ENCODE measurements at regions of chr9 and their contacts with region 1.

Region 1: GRCh38 chr9:69104830-69105527 is 69.1 kb upstream of the TJP2 start:
- DNase-seq: peak; percentile 73
- H3K4me3 Mint-ChIP-seq: no peak overlapping the region
- H3K27ac Mint-ChIP-seq: peak overlapping the region; percentile 61
- H3K4me1 Mint-ChIP-seq: no peaks in the 10 kb centered on the region
- H3K27me3 Mint-ChIP-seq: no peaks in the 10 kb centered on the region
- CTCF ChIP-seq: no peak

Region 2: DNA sequence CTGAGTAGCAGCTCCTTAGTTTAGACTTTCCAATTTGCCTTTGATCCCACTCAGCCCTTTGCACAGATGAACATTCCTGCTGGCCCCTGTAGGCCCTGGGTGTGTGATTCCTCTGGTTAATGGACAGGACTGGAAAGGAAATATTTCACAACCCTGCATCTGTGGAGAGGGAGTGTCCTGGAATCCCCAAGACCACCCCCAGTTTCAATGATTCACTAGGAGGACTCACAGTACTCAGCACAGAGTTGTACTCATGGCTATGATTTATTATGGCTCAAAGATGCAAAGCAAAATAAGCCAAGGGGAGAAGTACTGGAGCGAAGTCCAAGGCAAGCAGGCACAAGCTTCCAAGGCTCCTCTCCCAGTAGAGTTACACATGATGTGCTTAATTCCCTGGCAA is 26.7 kb after region 1 on chr9:
- CTCF ChIA-PET with region 1: interaction called, 3 read pairs
- POLR2A ChIA-PET with region 1: interaction called, 14 read pairs
- intact Hi-C with region 1: no loop called
- DNase-seq: peak; percentile 93
- H3K4me3 Mint-ChIP-seq: peak overlapping the region; percentile 0
- H3K27ac Mint-ChIP-seq: peak overlapping the region; percentile 77
- H3K4me1 Mint-ChIP-seq: peaks cover 33% of the 10 kb centered on the region
- H3K27me3 Mint-ChIP-seq: no peaks in the 10 kb centered on the region
- CTCF ChIP-seq: no peak

Measured in MCF 10A (cell line).